GM12878 (cell line): ENCODE measurements at regions of chr3 and their contacts with region 1.

Region 1: DNA sequence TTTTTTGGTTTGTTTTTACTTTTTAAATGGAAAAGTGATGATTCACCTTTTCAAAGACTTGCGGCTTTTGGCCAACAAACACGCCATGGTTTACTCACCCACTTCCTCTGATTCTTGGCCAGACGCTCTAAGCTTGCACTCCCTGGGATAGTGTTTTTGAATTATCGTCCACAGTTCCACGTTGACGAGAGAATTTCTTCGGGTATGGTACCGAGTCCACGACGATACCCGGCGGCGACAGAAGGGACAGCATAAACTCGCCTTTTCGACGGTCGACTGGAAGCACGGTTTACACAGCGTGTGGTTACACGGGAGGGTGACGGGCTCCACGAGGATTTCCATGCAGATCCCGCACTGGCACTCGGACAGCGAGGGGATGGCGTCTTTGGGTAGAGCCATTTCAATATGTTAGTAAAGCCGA is 783 bp downstream of the RNF168 start:
- DNase-seq: no peak
- ATAC-seq: peak; percentile 37
- H3K4me3 ChIP-seq: peak overlapping the region; percentile 99
- H3K27ac ChIP-seq: peak overlapping the region; percentile 99
- H3K4me1 ChIP-seq: no peaks in the 10 kb centered on the region
- H3K27me3 ChIP-seq: no peaks in the 10 kb centered on the region
- CTCF ChIP-seq: no peak
- EP300 ChIP-seq: no peak; a peak in 1 of 4 replicates
- POLR2A ChIP-seq: no peak
- RAD21 ChIP-seq: peak; percentile 6; the same call in 1 of the 2 replicates

Region 2: GRCh38 chr3:196357905-196358304 is 144.9 kb before region 1 on chr3:
- CTCF ChIA-PET with region 1: no interaction called
- POLR2A ChIA-PET with region 1: no interaction called
- RAD21 ChIA-PET with region 1: no interaction called
- SMC1A ChIA-PET with region 1: no interaction called
- in situ Hi-C with region 1: no loop called
- intact Hi-C with region 1: no loop called
- DNase-seq: no peak
- ATAC-seq: no peak
- H3K4me3 ChIP-seq: no peak overlapping the region
- H3K27ac ChIP-seq: no peak overlapping the region
- H3K4me1 ChIP-seq: no peaks in the 10 kb centered on the region
- H3K27me3 ChIP-seq: no peaks in the 10 kb centered on the region
- CTCF ChIP-seq: no peak
- EP300 ChIP-seq: no peak
- POLR2A ChIP-seq: no peak
- RAD21 ChIP-seq: no peak

Region 3: DNA sequence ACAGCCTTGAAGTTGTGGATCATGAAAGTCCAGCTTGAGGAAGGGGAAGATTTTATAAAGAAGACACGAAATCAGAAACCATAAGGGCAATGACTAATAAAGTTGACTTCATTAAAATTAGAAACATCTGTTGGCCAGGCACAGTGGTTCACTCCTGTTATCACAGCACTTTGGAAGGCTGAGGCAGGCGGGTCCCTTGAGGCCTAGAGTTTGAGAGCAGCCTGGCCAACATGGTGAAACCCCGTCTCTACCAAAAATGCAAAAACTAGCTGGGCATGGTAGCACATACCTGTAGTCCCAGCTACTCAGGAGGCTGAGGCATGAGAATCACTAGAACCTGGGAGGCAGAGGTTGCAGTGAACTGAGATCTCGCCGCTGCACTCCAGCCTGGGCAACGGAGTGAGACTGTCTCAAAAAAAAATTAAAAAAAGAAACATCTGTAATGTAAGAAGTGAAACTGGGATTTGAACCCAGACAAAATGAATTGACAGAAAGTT is 62.7 kb before region 1 on chr3:
- CTCF ChIA-PET with region 1: no interaction called
- POLR2A ChIA-PET with region 1: interaction called, 6 read pairs
- RAD21 ChIA-PET with region 1: interaction called, 4 read pairs
- SMC1A ChIA-PET with region 1: interaction called, 5 read pairs
- in situ Hi-C with region 1: no loop called
- intact Hi-C with region 1: loop called (anchors 5 kb)
- DNase-seq: peak; percentile 67
- ATAC-seq: peak; percentile 79
- H3K4me3 ChIP-seq: no peak overlapping the region
- H3K27ac ChIP-seq: peak overlapping the region; percentile 95
- H3K4me1 ChIP-seq: peaks cover 34% of the 10 kb centered on the region
- H3K27me3 ChIP-seq: no peaks in the 10 kb centered on the region
- CTCF ChIP-seq: no peak
- EP300 ChIP-seq: no peak
- POLR2A ChIP-seq: no peak
- RAD21 ChIP-seq: no peak

Region 4: GRCh38 chr3:196463804-196464203 is 39.0 kb before region 1 on chr3:
- CTCF ChIA-PET with region 1: no interaction called
- POLR2A ChIA-PET with region 1: interaction called, 10 read pairs
- RAD21 ChIA-PET with region 1: interaction called, 4 read pairs
- SMC1A ChIA-PET with region 1: no interaction called
- in situ Hi-C with region 1: no loop called
- intact Hi-C with region 1: no loop called
- DNase-seq: no peak
- ATAC-seq: no peak; the same call in 2 of the 3 replicates
- H3K4me3 ChIP-seq: no peak overlapping the region
- H3K27ac ChIP-seq: peak overlapping the region; percentile 95
- H3K4me1 ChIP-seq: peaks cover 6% of the 10 kb centered on the region
- H3K27me3 ChIP-seq: no peaks in the 10 kb centered on the region
- CTCF ChIP-seq: no peak
- EP300 ChIP-seq: no peak
- POLR2A ChIP-seq: no peak
- RAD21 ChIP-seq: no peak

Region 5: DNA sequence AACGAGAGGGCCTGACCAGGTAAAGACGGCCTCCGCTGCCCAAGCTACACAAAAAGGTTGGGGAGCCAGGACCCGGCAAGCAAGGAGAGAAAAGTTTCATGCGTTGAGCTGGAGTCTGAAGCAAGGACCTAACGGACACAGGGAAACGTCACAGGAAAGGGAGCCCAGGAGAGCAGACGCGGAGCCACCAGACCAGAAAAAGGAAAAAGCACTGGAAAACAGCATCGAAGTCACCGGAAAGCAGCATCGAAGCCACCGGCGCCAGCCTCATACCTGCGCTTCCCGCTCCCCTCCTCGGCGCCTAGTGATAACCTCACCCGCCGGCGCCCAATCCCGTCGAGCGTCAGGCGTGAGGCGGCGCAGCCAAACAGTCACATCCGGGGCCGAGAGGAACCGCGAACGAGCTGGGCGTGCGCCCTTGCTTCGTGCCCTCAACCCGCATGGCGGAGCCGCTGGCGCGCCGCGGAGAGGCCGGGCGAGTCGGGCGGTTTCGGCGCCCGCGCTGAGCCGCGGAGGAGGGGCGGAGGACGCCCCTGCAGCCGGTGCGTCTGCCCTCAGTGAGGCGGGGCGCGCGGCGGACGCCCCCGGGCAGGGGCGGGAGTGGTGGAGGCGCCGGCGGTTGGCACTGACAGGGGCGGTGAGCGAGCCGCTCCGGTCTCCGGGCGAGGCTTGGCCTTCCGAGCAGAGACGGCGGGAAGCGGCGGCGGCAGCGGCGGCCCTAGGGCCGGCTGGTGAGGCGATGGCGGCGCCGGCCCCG is 65.6 kb after region 1 on chr3 and contains the starts of genes FBXO45 and WDR53:
- CTCF ChIA-PET with region 1: no interaction called
- POLR2A ChIA-PET with region 1: interaction called, 3 read pairs
- RAD21 ChIA-PET with region 1: no interaction called
- SMC1A ChIA-PET with region 1: no interaction called
- in situ Hi-C with region 1: no loop called
- intact Hi-C with region 1: loop called (anchors 1 kb)
- DNase-seq: peak; percentile 80
- ATAC-seq: peak; percentile 97
- H3K4me3 ChIP-seq: peak within 1 kb of the TSS; percentile 75
- H3K27ac ChIP-seq: peak within 1 kb of the TSS; percentile 82
- H3K4me1 ChIP-seq: peaks cover 9% of the 10 kb centered on the region; the same call in 1 of the 2 replicates
- H3K27me3 ChIP-seq: no peaks in the 10 kb centered on the region
- CTCF ChIP-seq: no peak
- EP300 ChIP-seq: no peak
- POLR2A ChIP-seq: peak; percentile 84
- RAD21 ChIP-seq: no peak
- polyA plus RNA-seq, gene FBXO45: 7.5 to 10.0 TPM
- polyA plus RNA-seq, gene WDR53: 17.4 to 18.4 TPM